ENCODE measurements at regions of chr7 and their contacts with region 1.

Region 1: GRCh38 chr7:73769992-73770859 is at the start of gene CLDN3:
- DNase-seq: peak in 1 of 2 donors; percentile 48
- ATAC-seq: peak; percentile 45 to 59 (median 54)
- H3K4me3 ChIP-seq: peak within 1 kb of the TSS; percentile 44
- H3K27ac ChIP-seq: no peak within 1 kb of the TSS
- H3K4me1 ChIP-seq: no peaks in the 10 kb centered on the region
- H3K27me3 ChIP-seq: peaks cover 0 to 53% (median 34%) of the 10 kb centered on the region in 3 donors
- CTCF ChIP-seq: no peak
- total RNA-seq, gene CLDN3: 0.17 TPM in 1 of 4 donors, not detected in the others

Region 2: GRCh38 chr7:73364006-73364728 is 406.1 kb before region 1 on chr7:
- intact Hi-C with region 1: no loop called
- DNase-seq: no peak
- ATAC-seq: peak; percentile 32 to 72 (median 52)
- H3K4me3 ChIP-seq: no peak overlapping the region
- H3K27ac ChIP-seq: no peak overlapping the region
- H3K4me1 ChIP-seq: no peaks in the 10 kb centered on the region
- H3K27me3 ChIP-seq: no peaks in the 10 kb centered on the region
- CTCF ChIP-seq: no peak

Region 3: DNA sequence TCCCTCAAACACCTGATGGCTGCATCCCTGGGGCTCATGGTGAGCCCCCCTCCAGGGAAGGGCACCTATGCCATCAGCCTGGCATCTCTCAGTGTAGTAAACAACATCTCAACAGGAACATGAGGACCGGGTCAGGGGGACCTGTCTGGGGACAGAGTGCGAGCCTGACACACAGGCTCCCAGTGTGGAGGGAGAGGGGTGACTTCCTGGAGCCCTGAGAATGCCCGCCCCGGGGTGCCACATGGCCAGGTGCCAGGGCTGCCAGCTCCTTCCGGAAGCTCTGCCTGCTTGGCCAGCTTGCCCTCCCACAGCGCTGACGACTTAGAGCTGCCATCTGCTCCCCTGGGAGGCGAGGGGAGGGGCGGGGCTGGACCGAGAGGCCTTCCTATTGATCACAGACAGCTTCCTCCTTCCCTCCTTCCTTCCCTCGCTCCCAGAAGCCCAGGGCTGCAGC is 63.1 kb before region 1 on chr7:
- intact Hi-C with region 1: no loop called
- DNase-seq: peak; percentile 53 to 72
- ATAC-seq: no peak
- H3K4me3 ChIP-seq: no peak overlapping the region
- H3K27ac ChIP-seq: no peak overlapping the region
- H3K4me1 ChIP-seq: no peaks in the 10 kb centered on the region
- H3K27me3 ChIP-seq: no peaks in the 10 kb centered on the region
- CTCF ChIP-seq: no peak

Region 4: DNA sequence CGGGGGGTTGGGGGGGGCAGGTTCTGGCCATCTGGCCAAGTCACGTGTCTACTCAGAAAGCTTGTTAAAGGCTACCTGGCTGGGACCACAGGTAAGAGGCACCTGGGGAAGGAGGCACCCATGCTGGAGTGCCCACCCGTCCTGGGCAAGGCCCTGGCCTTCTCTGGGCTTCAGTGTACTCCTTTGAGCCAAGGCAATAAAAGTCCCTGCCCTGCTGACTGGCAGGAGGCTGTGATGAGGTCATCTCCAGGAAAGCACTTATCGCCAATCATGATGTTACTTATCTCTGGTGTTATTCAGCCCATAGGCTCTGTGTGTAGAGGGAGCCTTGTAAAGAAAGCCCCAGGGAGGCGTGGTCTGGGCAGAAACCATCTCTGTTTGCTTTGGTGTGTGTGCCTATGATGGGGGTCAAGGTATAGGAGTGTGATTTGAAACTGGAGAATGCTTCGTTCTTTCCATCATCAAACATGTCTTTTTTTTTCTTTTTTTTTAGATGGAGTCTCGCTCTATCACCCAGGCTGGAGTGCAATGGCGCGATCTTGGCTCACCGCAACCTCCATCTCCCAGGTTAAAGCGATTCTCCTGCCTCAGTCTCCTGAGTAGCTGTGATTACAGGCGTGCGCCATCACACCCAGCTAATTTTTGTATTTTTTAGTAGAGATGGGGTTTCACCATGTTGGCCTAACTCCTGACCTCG is 58.0 kb after region 1 on chr7:
- intact Hi-C with region 1: loop called in 1 of 2 experiments (anchors 10 kb)
- DNase-seq: no peak
- ATAC-seq: peak; percentile 22 to 66 (median 58)
- H3K4me3 ChIP-seq: no peak overlapping the region
- H3K27ac ChIP-seq: no peak overlapping the region
- H3K4me1 ChIP-seq: peaks cover 10% of the 10 kb centered on the region
- H3K27me3 ChIP-seq: peaks cover 0 to 5% (median 2%) of the 10 kb centered on the region in 3 donors
- CTCF ChIP-seq: no peak

Region 5: GRCh38 chr7:73879977-73880681 is 109.9 kb after region 1 on chr7:
- intact Hi-C with region 1: loop called in 1 of 2 experiments (anchors 2 kb)
- DNase-seq: peak; percentile 76 to 85
- ATAC-seq: peak in 3 of 4 donors; percentile 59 to 78 (median 73)
- H3K4me3 ChIP-seq: no peak overlapping the region
- H3K27ac ChIP-seq: peak overlapping the region; percentile 9
- H3K4me1 ChIP-seq: peaks cover 7% of the 10 kb centered on the region
- H3K27me3 ChIP-seq: peaks cover 0 to 20% (median 0%) of the 10 kb centered on the region in 3 donors
- CTCF ChIP-seq: no peak

Measured in psoas muscle (tissue), 8 donors.